CD4-positive, alpha-beta T cell (primary cell): ENCODE measurements at regions of chr1 and their contacts with region 1.

Region 1: GRCh38 chr1:247273013-247273412 is 17.1 kb downstream of the VN1R5 start:
- DNase-seq: no peak
- ATAC-seq: no peak
- H3K4me3 ChIP-seq: no peak overlapping the region
- H3K4me3 Mint-ChIP-seq: no peak overlapping the region
- H3K27ac ChIP-seq: no peak overlapping the region
- H3K27ac Mint-ChIP-seq: no peak overlapping the region
- H3K4me1 ChIP-seq: no peaks in the 10 kb centered on the region
- H3K4me1 Mint-ChIP-seq: no peaks in the 10 kb centered on the region
- H3K27me3 ChIP-seq: no peaks in the 10 kb centered on the region
- H3K27me3 Mint-ChIP-seq: no peaks in the 10 kb centered on the region
- CTCF ChIP-seq: no peak

Region 2: DNA sequence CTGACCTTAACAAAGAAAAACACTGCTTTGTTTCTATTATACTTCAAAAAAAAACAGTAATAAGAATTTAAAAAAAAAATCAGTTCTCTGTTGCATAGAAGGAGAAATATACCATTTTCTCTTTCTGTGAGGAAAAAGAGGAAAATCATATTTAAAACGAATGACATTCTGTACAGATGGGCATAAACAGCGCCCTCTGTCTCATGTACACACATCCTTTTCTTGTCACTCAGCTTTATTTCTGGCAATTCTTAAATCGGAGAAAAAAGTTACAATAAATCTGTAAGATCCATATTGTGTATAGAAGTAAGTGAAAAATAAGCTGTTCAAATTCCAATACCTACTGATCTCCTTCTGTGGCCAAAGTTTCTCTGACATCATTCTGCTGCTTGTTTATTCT is 1011.4 kb before region 1 on chr1:
- CTCF ChIA-PET with region 1: no interaction called
- POLR2A ChIA-PET with region 1: no interaction called
- intact Hi-C with region 1: no loop called
- DNase-seq: no peak
- ATAC-seq: no peak
- H3K4me3 ChIP-seq: no peak overlapping the region
- H3K4me3 Mint-ChIP-seq: no peak overlapping the region
- H3K27ac ChIP-seq: no peak overlapping the region
- H3K27ac Mint-ChIP-seq: no peak overlapping the region
- H3K4me1 ChIP-seq: no peaks in the 10 kb centered on the region
- H3K4me1 Mint-ChIP-seq: no peaks in the 10 kb centered on the region
- H3K27me3 ChIP-seq: no peaks in the 10 kb centered on the region
- H3K27me3 Mint-ChIP-seq: no peaks in the 10 kb centered on the region
- CTCF ChIP-seq: no peak

Region 3: GRCh38 chr1:247228133-247228532 is 44.9 kb before region 1 on chr1:
- CTCF ChIA-PET with region 1: no interaction called
- POLR2A ChIA-PET with region 1: no interaction called
- intact Hi-C with region 1: loop called in 1 of 2 experiments (anchors 5 kb)
- DNase-seq: no peak
- ATAC-seq: no peak
- H3K4me3 ChIP-seq: no peak overlapping the region
- H3K4me3 Mint-ChIP-seq: no peak overlapping the region
- H3K27ac ChIP-seq: no peak overlapping the region
- H3K27ac Mint-ChIP-seq: no peak overlapping the region
- H3K4me1 ChIP-seq: no peaks in the 10 kb centered on the region
- H3K4me1 Mint-ChIP-seq: no peaks in the 10 kb centered on the region
- H3K27me3 ChIP-seq: no peaks in the 10 kb centered on the region
- H3K27me3 Mint-ChIP-seq: peaks cover 27% of the 10 kb centered on the region
- CTCF ChIP-seq: no peak